ENCODE measurements at regions of chr9 and their contacts with region 1.

Region 1: DNA sequence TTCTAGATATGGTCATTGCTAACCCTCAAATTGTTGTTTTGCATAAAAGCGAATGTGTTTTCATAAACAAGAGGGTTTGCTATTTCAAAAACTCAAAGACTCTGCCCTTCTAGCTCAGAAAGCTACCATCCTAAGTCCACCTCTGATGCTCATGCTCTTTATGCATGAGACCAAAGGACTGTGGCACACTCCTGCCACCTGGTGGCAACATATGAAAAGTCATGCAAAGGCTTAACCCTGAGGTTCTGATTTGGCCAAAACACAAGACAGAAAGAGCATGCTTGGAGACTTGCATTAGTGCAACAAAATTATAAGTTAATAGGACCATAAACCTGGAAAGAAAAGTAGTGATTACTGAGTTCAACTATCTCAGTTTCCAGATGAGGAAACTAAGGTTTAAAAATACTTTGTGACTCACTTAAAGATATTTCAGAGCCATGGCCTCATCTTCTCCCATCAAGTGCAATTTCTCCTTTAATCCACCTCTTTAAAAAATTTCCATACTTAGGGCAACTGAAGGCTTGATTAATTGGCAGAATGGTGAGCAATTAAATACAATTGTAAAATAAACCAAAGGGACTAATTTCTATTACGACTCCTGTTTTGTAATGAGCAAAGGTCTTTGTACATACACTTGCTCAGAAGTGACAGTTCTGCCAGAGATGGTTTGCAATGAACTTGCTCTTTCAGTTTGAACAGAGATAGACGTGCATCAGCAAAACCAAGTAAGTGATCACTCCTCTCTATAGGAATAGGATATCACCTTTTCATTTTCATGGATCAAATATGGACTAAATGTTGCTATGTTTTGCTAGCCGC is 110.7 kb upstream of the RAD23B start:
- DNase-seq: peak; percentile 84
- ATAC-seq: peak; percentile 88
- H3K4me3 ChIP-seq: no peak overlapping the region
- H3K27ac ChIP-seq: no peak overlapping the region
- H3K4me1 ChIP-seq: peaks cover 6% of the 10 kb centered on the region; the same call in 1 of the 2 replicates
- H3K27me3 ChIP-seq: no peaks in the 10 kb centered on the region
- CTCF ChIP-seq: peak; percentile 88

Region 2: DNA sequence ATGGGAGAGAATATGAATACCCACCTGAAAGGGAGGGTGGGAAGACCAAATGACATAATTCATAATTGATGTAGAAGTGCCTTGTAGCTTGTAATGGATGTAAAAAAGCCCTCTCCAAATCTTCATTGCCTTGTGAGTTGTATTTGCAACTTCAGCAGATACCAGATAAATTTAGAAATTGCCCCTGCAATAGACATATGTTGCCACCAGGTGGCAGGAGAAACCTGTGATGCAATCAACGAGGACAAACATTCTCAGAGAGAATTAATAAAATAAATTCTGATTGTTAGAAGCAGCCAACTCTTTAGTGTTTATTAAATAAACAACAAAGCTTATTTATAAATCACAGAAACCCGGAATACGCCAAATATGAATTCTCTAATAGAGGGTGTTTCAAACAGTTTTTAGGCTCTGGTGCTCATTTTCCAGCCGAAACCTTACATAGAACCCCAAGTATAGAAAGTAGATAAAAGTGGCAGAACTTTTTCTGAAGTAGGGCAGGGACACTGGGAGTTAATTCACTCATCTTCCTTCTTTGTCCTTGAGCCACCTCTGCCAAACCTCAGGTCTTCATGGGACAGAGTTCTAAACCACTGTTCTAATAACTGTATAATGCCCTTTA is 1330.2 kb before region 1 on chr9:
- CTCF ChIA-PET with region 1: no interaction called
- POLR2A ChIA-PET with region 1: no interaction called
- intact Hi-C with region 1: loop called (anchors 2 kb)
- DNase-seq: peak; percentile 73
- ATAC-seq: no peak
- H3K4me3 ChIP-seq: no peak overlapping the region
- H3K27ac ChIP-seq: no peak overlapping the region
- H3K4me1 ChIP-seq: no peaks in the 10 kb centered on the region
- H3K27me3 ChIP-seq: no peaks in the 10 kb centered on the region
- CTCF ChIP-seq: peak; percentile 84

Region 3: DNA sequence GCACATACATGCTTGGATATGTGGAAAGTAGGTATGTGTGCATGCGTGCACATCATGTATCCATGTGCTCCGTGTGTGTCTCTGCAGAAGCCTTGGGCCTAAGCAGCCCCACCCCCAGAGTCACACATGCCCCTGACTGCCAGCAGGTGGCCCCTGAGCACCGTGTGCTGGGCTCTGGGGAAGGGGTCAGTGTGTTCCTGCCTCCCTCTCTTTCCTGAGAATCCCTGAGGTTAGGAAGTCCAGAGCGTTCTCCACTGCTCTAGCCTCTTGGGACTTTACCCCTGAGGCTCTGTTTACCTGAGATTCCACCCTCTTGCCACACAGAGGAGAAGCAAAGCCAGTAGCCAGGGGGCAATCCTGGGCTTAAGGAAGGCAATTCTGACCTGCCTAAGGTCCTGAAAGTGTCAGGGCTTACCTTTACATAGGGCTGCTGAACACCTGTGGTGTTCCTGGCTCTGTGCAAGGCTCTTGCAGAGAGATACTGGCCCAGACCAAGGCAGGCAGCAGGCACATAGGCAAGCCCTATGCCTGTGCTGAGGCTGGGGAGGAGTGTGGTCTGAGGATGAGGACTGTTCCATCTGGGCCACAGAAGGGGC is 1270.8 kb before region 1 on chr9:
- CTCF ChIA-PET with region 1: no interaction called
- POLR2A ChIA-PET with region 1: no interaction called
- intact Hi-C with region 1: loop called (anchors 5 kb)
- DNase-seq: peak; percentile 67
- ATAC-seq: peak; percentile 94
- H3K4me3 ChIP-seq: no peak overlapping the region
- H3K27ac ChIP-seq: no peak overlapping the region
- H3K4me1 ChIP-seq: no peaks in the 10 kb centered on the region
- H3K27me3 ChIP-seq: no peaks in the 10 kb centered on the region
- CTCF ChIP-seq: peak; percentile 85

Region 4: DNA sequence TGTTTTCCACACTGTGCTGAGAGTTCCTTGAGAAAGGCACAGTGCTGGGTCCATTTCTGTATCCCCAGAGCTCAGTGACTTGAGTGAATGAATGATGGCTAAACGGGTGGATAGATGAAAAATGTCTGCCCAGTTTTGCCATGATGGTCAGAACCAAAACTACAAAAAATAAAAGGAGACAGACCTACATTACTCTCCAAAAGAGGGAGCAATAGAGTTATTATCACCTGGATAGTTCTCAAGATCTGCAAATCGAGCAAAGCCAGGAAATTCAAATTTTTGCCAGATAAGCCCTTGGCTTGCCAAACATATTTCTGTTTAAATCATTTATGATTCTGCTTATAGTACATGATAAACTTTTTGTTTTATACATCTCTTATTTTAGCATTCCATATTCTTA is 523.6 kb before region 1 on chr9:
- CTCF ChIA-PET with region 1: no interaction called
- POLR2A ChIA-PET with region 1: no interaction called
- intact Hi-C with region 1: loop called (anchors 5 kb)
- DNase-seq: peak; percentile 59
- ATAC-seq: no peak
- H3K4me3 ChIP-seq: no peak overlapping the region
- H3K27ac ChIP-seq: no peak overlapping the region
- H3K4me1 ChIP-seq: no peaks in the 10 kb centered on the region
- H3K27me3 ChIP-seq: no peaks in the 10 kb centered on the region
- CTCF ChIP-seq: peak; percentile 60

Region 5: GRCh38 chr9:106830527-106831150 is 341.7 kb before region 1 on chr9:
- CTCF ChIA-PET with region 1: no interaction called
- POLR2A ChIA-PET with region 1: no interaction called
- intact Hi-C with region 1: no loop called
- DNase-seq: no peak
- ATAC-seq: no peak
- H3K4me3 ChIP-seq: no peak overlapping the region
- H3K27ac ChIP-seq: no peak overlapping the region
- H3K4me1 ChIP-seq: no peaks in the 10 kb centered on the region
- H3K27me3 ChIP-seq: no peaks in the 10 kb centered on the region
- CTCF ChIP-seq: no peak

Region 6: GRCh38 chr9:107039542-107039941 is 132.8 kb before region 1 on chr9:
- CTCF ChIA-PET with region 1: no interaction called
- POLR2A ChIA-PET with region 1: no interaction called
- intact Hi-C with region 1: no loop called
- DNase-seq: no peak
- ATAC-seq: no peak
- H3K4me3 ChIP-seq: no peak overlapping the region
- H3K27ac ChIP-seq: no peak overlapping the region
- H3K4me1 ChIP-seq: no peaks in the 10 kb centered on the region
- H3K27me3 ChIP-seq: no peaks in the 10 kb centered on the region
- CTCF ChIP-seq: no peak

Region 7: DNA sequence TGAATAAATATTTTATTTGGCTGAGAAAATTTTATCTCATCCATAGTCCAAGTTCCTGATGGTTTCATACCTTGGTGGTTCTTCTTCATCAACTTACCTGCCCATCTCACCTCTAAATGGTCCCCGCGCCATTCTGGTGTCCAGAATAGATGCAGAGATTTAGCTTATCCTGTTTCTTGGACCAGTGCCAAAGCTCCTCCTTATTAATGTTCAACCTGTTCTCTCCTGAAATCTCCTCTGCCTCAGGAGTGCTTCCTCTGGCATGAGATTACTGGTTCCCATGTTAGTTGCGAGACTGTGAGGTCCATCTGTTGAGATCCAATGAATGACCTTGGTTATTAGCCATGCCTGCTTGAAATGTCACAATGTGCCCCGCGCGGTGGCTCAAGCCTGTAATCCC is 69.7 kb before region 1 on chr9:
- CTCF ChIA-PET with region 1: no interaction called
- POLR2A ChIA-PET with region 1: no interaction called
- intact Hi-C with region 1: no loop called
- DNase-seq: no peak
- ATAC-seq: no peak
- H3K4me3 ChIP-seq: no peak overlapping the region
- H3K27ac ChIP-seq: no peak overlapping the region
- H3K4me1 ChIP-seq: no peaks in the 10 kb centered on the region
- H3K27me3 ChIP-seq: no peaks in the 10 kb centered on the region
- CTCF ChIP-seq: no peak

Region 8: DNA sequence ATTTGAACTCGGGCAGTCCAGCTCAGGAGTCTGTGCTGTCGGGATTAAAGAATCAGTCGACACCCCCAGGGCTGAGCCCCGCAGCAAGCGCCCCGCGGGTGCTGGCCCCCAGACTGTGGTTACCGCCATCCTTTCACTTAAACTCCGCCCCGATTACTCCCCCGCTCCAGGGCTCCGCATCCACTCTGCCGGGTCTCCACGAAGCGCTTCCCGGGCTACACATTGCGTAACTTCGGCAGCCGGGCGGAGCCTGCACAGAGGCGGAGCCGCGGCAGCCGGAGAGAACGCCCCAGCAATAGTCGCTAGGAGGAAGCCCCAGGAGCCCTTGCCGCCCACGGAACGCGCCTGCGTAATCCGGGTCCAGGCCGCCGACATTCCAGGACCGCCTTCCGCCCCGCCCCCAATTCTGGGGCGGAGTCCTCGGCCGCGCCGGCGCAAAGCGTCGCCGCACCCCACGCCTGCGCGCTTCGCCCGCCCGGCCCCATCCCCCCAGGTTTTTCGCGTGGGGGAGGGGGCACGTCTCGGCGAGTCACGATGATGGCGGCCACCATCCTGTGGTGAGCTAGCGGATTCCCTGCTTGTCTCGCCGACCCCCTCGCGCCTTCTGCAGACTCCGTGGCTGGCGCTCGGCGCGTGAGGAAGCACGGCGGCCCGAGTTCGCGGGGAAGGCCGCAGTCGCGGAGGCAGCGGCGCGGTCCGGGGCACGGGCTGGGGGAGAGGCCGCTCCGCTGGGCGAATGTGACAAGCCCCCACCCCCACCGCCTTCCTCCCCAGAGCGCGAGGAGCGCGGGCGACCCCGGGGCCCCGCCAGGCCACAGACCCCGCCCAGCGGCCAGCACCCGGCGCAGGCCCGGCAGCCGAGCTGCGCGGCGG is 110.6 kb after region 1 on chr9 and contains the start of gene RAD23B:
- CTCF ChIA-PET with region 1: no interaction called
- POLR2A ChIA-PET with region 1: no interaction called
- intact Hi-C with region 1: no loop called
- DNase-seq: peak; percentile 96
- ATAC-seq: peak; percentile 91
- H3K4me3 ChIP-seq: peak within 1 kb of the TSS; percentile 94
- H3K27ac ChIP-seq: peak within 1 kb of the TSS; percentile 93
- H3K4me1 ChIP-seq: peaks cover 29% of the 10 kb centered on the region
- H3K27me3 ChIP-seq: no peaks in the 10 kb centered on the region
- CTCF ChIP-seq: no peak
- total RNA-seq, gene RAD23B: 67.9 and 74.6 TPM in 2 replicates

Measured in PC-3 (cell line).